Activated T-helper 1 cell treated with anti-CD3 and anti-CD28 coated beads, Interleukin-12 subunit alpha, Interleukin-12 subunit beta, Interleukin-2, Interleukin-4 antibody, amounts not matched to agents 30 ng/mL and 10 ng/mL and 1 ng/mL, durations not matched to agents 14 hours and 24 hours and 36 hours (primary cell): ENCODE measurements at regions of chr19 and their contacts with region 1.

Region 1: DNA sequence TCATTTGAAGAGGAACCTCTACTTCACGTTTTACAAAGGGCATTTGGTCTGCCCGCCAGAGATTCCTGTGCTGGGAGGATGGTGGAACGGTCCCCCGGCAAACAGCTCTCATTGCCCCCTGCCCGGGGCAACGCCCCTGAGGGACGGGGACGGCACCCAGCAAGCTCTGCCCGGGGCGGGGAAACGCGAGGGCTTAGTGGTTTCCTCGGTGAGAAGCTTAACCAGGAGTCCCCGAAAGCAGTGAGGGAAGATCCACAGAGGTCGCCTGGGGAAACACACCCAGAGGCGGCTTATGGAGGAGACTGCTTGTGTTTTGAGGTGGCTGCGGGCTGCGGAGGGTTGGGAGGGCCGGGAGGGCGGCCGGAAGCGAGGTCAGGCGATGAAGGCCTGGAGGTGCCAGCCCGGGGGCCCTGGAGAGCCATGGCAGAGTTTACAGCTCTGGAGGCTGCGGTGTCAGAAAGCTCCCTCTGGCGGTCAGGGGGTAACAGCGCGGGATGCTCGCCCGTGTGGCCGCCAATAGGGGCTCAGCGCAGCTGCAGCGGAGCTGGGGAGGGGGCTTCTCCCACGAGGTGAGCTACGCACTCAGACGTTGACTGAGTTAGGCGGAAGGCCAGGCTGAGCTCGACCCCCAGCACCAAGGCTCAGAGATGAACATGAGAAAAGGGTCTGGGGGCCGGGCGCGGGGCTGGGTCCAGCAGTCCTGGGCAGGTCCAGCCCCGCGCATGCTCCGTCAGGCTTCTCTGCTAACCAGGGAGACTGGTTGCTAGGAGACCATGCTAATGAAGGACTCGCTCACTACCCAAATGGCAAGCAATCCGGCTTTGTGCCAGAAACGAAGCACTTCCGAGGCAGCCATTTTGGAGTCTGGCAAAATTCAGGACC is 652 bp upstream of the TPGS1 start:
- DNase-seq: peak; percentile 92
- H3K4me3 Mint-ChIP-seq: peak overlapping the region; percentile 98
- H3K27ac Mint-ChIP-seq: peak overlapping the region; percentile 100
- H3K4me1 Mint-ChIP-seq: peaks cover 41% of the 10 kb centered on the region
- H3K27me3 Mint-ChIP-seq: no peaks in the 10 kb centered on the region

Region 2: DNA sequence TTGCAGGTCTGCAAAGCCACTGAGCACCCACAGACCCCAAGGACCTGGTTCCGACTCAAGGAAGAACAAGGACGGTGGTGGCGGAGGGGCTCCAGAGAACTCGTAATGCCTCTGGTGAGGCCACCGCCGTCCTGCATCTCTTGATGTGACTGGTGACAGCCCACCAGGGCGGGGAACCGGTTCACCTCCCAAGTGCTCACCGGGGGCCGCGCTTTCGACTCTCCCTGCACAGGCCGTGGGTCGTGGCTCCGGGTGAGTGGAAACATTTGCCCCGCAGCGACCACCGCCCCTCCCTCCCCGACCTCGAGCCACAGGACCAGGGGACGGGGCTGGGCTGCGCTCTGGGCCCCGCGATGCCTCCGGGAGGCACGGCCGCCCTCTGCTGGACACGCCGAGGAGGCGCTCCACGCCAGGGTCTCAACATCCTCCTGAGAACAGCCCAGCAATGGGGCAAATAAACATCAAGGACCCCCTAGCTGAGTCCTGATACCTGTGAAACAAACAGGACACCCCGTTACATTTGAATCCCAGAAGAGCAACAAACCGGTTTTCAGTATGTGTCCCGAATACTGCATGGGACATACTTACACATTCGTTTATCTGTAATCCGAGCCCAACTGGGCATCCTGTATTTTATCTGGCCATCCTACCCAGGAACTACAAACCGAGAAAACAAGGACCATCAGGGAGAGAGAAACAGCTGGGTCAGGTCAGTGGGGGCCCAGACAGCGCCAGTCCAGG is 211.5 kb before region 1 on chr19:
- intact Hi-C with region 1: loop called (anchors 1 kb)
- DNase-seq: peak; percentile 16
- H3K4me3 Mint-ChIP-seq: no peak overlapping the region
- H3K27ac Mint-ChIP-seq: no peak overlapping the region
- H3K4me1 Mint-ChIP-seq: no peaks in the 10 kb centered on the region
- H3K27me3 Mint-ChIP-seq: peaks cover 36% of the 10 kb centered on the region

Region 3: DNA sequence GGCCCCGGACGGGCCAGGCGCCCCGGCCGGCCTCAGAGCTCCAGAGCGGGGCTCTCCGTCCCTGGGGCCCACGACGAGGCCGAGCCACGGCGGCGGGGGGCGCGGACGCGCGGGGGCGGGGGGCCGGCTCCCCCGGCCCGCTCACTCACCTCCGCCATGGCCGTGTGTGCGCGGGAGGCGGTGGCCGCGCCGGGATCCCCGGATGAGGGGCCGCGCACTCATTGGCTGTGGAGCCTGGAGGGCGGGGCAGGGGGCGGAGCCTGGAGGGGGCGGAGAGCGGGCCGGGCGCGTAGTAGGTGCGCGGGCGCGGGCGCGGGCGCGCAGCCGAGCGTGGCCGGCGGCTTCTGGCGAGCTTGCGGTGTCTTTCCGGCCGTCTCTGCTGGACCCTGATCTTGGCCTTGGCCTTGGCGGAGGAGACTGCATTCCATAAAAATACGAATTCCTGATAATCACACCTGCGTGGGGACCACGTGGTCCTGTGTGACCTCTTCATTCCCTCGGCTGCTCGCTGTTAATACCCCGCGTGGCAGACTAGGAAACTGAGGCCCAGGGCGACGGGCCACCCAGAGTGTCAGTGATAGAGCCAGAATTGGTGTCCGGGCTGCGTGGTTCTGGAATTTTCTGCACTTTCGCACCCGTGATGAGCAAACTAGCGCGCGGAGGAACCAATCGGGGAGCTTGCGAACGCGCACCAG is 161.9 kb before region 1 on chr19 and contains the start of gene MIER2:
- intact Hi-C with region 1: loop called (anchors 5 kb)
- DNase-seq: peak; percentile 91
- H3K4me3 Mint-ChIP-seq: peak within 1 kb of the TSS; percentile 84
- H3K27ac Mint-ChIP-seq: peak within 1 kb of the TSS; percentile 74
- H3K4me1 Mint-ChIP-seq: peaks cover 49% of the 10 kb centered on the region
- H3K27me3 Mint-ChIP-seq: peaks cover 5% of the 10 kb centered on the region
- total RNA-seq, gene MIER2: 32.0 and 34.2 TPM in 2 replicates

Region 4: GRCh38 chr19:488505-489417 is 17.9 kb before region 1 on chr19:
- intact Hi-C with region 1: loop called (anchors 1 kb)
- DNase-seq: peak; percentile 87
- H3K4me3 Mint-ChIP-seq: peak overlapping the region; percentile 88
- H3K27ac Mint-ChIP-seq: peak overlapping the region; percentile 89
- H3K4me1 Mint-ChIP-seq: no peaks in the 10 kb centered on the region
- H3K27me3 Mint-ChIP-seq: peaks cover 10% of the 10 kb centered on the region

Region 5: DNA sequence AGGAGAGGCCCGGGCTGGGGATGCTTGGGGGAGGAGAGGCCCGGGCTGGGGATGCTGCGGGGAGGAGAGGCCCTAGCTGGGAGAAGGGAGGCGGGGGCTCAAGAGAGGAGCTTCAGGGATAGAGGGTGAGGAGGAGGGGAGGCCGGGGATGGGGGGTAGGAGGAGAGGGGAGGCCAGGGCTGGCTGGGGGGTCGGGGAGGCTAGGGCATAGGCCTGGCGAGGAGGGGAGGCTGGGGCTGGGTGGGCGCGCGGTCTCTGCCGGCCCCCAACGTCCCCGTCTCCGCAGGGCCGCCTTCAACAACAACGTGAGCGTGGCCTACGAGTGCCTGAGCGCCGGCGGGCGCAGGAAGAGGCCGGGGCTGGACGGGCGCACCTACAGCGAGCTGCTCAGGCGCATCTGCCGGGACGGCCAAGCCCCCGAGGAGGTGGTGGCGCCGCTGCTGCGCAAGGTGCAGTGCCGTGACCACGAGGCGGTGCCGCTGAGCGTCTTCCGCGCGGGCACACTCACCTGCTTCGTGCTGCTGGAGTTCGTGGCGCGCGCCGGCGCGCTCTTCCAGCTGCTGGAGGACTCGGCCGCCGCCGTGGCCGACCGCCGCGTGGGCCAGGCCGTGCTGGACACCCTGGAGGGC is 12.1 kb after region 1 on chr19:
- intact Hi-C with region 1: no loop called
- DNase-seq: no peak
- H3K4me3 Mint-ChIP-seq: no peak overlapping the region
- H3K27ac Mint-ChIP-seq: no peak overlapping the region
- H3K4me1 Mint-ChIP-seq: peaks cover 11% of the 10 kb centered on the region
- H3K27me3 Mint-ChIP-seq: no peaks in the 10 kb centered on the region

Region 6: DNA sequence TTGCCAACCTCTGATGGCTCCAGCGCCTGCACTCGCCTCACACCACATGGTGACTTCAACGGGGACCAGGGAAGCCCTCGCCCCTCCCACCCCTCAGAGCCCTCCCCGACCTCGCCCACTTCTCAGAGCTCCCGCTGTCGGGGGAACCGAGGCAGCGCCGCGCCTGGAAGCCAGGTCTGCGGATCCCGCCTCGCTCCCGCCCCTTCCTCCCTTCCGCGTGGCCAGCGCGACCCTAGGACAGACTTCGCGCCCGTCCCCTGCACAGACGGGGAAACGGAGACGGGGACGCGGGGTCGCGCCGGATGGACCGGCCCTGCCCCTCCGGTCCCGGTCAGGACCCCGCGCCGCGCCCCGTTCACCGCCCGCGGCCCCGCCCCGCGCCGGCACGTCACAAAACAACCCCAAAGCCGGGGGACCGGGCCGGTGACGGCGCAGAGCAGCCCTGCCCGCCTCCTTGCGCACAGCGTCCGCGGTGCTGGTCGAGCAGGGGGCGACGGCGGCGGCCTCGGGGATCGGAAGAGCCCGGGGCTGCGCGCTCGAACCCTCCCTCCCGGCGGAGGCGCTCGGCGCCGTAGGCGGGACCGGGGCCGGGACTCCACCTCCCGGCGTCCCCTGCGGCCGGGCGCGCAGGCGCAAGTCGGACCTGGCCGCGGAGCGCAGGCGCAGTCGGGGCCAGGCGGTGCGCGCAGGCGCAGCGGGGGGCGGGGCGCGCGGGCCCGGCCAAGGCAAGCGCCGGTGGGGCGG is 24.5 kb after region 1 on chr19:
- intact Hi-C with region 1: loop called (anchors 1 kb)
- DNase-seq: peak; percentile 91
- H3K4me3 Mint-ChIP-seq: peak overlapping the region; percentile 83
- H3K27ac Mint-ChIP-seq: peak overlapping the region; percentile 81
- H3K4me1 Mint-ChIP-seq: peaks cover 9% of the 10 kb centered on the region
- H3K27me3 Mint-ChIP-seq: no peaks in the 10 kb centered on the region

Region 7: GRCh38 chr19:572140-572742 is 65.6 kb after region 1 on chr19 and contains the start of gene BSG:
- intact Hi-C with region 1: loop called (anchors 1 kb)
- DNase-seq: peak; percentile 99
- H3K4me3 Mint-ChIP-seq: peak within 1 kb of the TSS; percentile 88
- H3K27ac Mint-ChIP-seq: peak within 1 kb of the TSS; percentile 99
- H3K4me1 Mint-ChIP-seq: peaks cover 25% of the 10 kb centered on the region
- H3K27me3 Mint-ChIP-seq: peaks cover 6% of the 10 kb centered on the region
- total RNA-seq, gene BSG: 307 and 308 TPM in 2 replicates

Region 8: GRCh38 chr19:633068-633785 is 126.6 kb after region 1 on chr19 and contains the start of gene POLRMT:
- intact Hi-C with region 1: loop called (anchors 1 kb)
- DNase-seq: peak; percentile 96
- H3K4me3 Mint-ChIP-seq: peak within 1 kb of the TSS; percentile 96
- H3K27ac Mint-ChIP-seq: peak within 1 kb of the TSS; percentile 95
- H3K4me1 Mint-ChIP-seq: peaks cover 6% of the 10 kb centered on the region
- H3K27me3 Mint-ChIP-seq: no peaks in the 10 kb centered on the region
- total RNA-seq, gene POLRMT: 103 and 104 TPM in 2 replicates